Activated CD4-positive, alpha-beta memory T cell treated with anti-CD3 and anti-CD28 coated beads for 36 hours (primary cell): ENCODE measurements at regions of chrX and their contacts with region 1.

Region 1: GRCh38 chrX:153667956-153668396 is 5.6 kb downstream of the PNCK start:
- DNase-seq: peak; percentile 87
- H3K4me3 Mint-ChIP-seq: peak overlapping the region; percentile 65
- H3K27ac Mint-ChIP-seq: no peak overlapping the region
- H3K4me1 Mint-ChIP-seq: peaks cover 7% of the 10 kb centered on the region
- H3K27me3 Mint-ChIP-seq: peaks cover 6% of the 10 kb centered on the region

Region 2: GRCh38 chrX:152958524-152959465 is 709.2 kb before region 1 on chrX:
- CTCF ChIA-PET with region 1: interaction called, 16 read pairs
- POLR2A ChIA-PET with region 1: no interaction called
- intact Hi-C with region 1: loop called (anchors 2 kb)
- DNase-seq: peak; percentile 93
- H3K4me3 Mint-ChIP-seq: peak overlapping the region; percentile 51
- H3K27ac Mint-ChIP-seq: peak overlapping the region; percentile 87
- H3K4me1 Mint-ChIP-seq: peaks cover 6% of the 10 kb centered on the region
- H3K27me3 Mint-ChIP-seq: no peaks in the 10 kb centered on the region

Region 3: DNA sequence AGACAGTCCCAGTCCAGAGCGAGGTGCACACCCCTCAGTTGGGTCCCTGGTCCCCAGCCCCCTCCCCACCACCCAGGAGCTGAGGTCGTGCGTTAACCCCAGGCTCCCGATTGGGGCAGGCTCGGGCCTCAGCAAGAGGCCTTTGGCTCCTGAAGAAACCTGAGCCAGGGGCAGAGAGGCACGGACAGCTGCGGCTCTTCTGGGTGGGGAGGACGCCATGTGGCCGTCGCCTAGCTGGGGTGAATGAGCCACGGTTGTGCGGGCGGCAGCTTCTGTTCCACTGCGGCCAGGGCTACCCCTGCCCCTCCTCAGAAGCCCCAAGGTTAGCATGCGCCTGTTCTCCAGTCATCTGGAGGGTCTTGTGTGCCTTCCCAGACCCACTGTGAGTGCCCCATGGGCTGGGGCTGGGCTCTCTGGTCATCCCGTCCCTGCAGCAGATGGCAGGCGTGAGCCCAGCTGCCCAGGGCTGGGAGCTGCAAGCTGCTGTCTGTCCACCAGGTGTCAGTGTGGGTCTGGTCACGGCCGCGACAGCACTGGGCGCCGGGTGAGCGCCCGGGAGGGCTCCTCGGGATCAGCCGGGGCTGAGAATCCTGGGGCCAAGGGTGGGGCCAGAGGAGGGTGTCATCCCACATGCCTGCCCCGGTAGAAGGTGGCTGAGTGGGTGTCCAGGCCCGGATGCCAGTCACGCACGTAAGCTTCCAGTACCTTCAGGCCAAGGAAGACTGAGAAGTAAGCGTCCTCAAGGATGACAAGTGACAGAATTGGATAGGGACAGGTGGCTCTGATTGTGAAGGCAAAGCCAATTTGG is 128.6 kb before region 1 on chrX:
- CTCF ChIA-PET with region 1: interaction called, 50 read pairs
- POLR2A ChIA-PET with region 1: no interaction called
- intact Hi-C with region 1: loop called (anchors 5 kb)
- DNase-seq: peak; percentile 69
- H3K4me3 Mint-ChIP-seq: no peak overlapping the region
- H3K27ac Mint-ChIP-seq: no peak overlapping the region
- H3K4me1 Mint-ChIP-seq: no peaks in the 10 kb centered on the region
- H3K27me3 Mint-ChIP-seq: peaks cover 2% of the 10 kb centered on the region

Region 4: DNA sequence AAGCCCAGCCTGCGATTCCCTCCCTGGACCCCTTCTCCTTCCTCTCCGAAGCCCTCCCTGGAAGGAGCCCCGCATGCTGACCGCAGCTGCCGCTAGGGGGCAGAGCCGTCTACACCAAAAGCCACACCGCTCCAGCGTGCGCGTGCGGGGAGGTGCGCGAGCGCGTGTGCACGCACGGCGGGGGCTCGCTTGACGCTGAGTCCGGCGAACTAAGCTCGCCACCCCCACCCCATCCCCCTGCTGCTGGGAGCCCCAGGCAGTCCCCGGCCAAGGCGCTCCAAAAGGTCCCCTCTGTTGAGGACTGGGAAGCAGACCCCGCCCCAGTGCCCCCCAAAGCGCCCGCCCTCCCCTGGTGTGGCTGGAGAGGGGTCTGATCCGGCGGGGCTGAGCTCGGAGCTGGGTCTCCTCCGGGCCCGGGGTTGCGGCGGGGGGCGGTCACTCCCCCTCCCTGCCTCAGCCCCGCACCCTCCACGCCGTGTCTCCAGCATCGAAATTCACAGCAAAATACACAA is 58.0 kb before region 1 on chrX:
- CTCF ChIA-PET with region 1: interaction called, 35 read pairs
- POLR2A ChIA-PET with region 1: no interaction called
- intact Hi-C with region 1: loop called (anchors 2 kb)
- DNase-seq: peak; percentile 82
- H3K4me3 Mint-ChIP-seq: peak overlapping the region; percentile 71
- H3K27ac Mint-ChIP-seq: no peak overlapping the region
- H3K4me1 Mint-ChIP-seq: peaks cover 9% of the 10 kb centered on the region
- H3K27me3 Mint-ChIP-seq: no peaks in the 10 kb centered on the region

Region 5: GRCh38 chrX:153657161-153657560 is 10.8 kb before region 1 on chrX:
- CTCF ChIA-PET with region 1: interaction called, 31 read pairs
- POLR2A ChIA-PET with region 1: no interaction called
- intact Hi-C with region 1: no loop called
- DNase-seq: no peak
- H3K4me3 Mint-ChIP-seq: no peak overlapping the region
- H3K27ac Mint-ChIP-seq: no peak overlapping the region
- H3K4me1 Mint-ChIP-seq: no peaks in the 10 kb centered on the region
- H3K27me3 Mint-ChIP-seq: peaks cover 5% of the 10 kb centered on the region

Region 6: DNA sequence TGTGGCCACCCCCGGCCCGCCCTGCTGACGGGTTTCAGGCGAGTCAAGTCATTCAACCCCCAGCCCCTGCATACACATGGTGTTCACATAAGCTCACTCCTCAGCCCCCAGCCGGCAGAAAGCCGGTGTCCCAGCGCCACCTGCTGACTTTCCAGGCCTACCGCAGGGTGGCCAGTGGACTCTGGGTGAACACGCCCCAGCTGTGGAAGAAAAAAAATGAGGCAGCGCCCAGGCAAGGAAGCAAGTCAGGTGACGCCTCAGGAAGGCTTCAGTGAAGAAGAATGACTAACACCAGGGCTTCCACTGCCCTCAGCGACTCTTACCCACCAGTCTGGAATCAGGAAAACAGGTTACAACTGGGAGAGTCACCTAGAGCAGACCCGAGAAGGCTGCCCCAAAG is 40.4 kb after region 1 on chrX:
- CTCF ChIA-PET with region 1: interaction called, 10 read pairs
- POLR2A ChIA-PET with region 1: no interaction called
- intact Hi-C with region 1: no loop called
- DNase-seq: peak; percentile 65
- H3K4me3 Mint-ChIP-seq: no peak overlapping the region
- H3K27ac Mint-ChIP-seq: peak overlapping the region; percentile 23
- H3K4me1 Mint-ChIP-seq: peaks cover 7% of the 10 kb centered on the region
- H3K27me3 Mint-ChIP-seq: no peaks in the 10 kb centered on the region